ENCODE measurements at regions of chr2 and their contacts with region 1.

Region 1: DNA sequence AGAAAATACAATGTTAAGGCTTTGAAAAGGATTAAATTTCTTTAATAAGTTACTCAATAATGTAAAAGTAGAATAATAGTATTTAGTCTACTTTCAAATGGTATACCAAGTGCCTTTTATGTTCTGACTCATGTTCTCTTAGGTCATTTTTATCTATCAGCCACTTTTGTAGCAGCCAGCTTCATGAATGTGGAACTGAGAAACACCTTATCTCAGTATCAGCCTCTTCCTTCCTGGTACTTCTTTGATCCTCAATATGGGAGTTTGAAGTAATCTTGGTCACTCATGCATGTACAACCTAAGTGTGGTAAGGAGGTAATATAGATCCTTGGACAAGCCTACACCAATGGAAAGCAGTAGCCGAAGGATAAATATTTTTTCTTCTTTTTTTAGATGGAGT is 180.4 kb upstream of the NRXN1 start:
- DNase-seq: no peak
- ATAC-seq: no peak
- H3K4me3 ChIP-seq: no peak overlapping the region
- H3K27ac ChIP-seq: no peak overlapping the region
- H3K4me1 ChIP-seq: no peaks in the 10 kb centered on the region
- H3K27me3 ChIP-seq: no peaks in the 10 kb centered on the region
- CTCF ChIP-seq: no peak
- POLR2A ChIP-seq: no peak
- RAD21 ChIP-seq: no peak

Region 2: GRCh38 chr2:51301371-51301770 is 89.0 kb after region 1 on chr2:
- CTCF ChIA-PET with region 1: interaction called, 10 read pairs
- POLR2A ChIA-PET with region 1: no interaction called
- dilution Hi-C with region 1: no loop called
- in situ Hi-C with region 1: no loop called
- intact Hi-C with region 1: no loop called
- DNase-seq: peak; percentile 21
- ATAC-seq: peak; percentile 49
- H3K4me3 ChIP-seq: no peak overlapping the region
- H3K27ac ChIP-seq: no peak overlapping the region
- H3K4me1 ChIP-seq: no peaks in the 10 kb centered on the region
- H3K27me3 ChIP-seq: no peaks in the 10 kb centered on the region
- CTCF ChIP-seq: no peak
- POLR2A ChIP-seq: no peak
- RAD21 ChIP-seq: no peak